CD8-positive, alpha-beta T cell (primary cell): ENCODE measurements at regions of chrX and their contacts with region 1.

Region 1: GRCh38 chrX:57286507-57287251 is at the start of gene FAAH2:
- DNase-seq: peak; percentile 15 to 85 (median 53)
- ATAC-seq: peak; percentile 89
- H3K4me3 ChIP-seq: peak within 1 kb of the TSS; percentile 45 to 61
- H3K4me3 Mint-ChIP-seq: peak within 1 kb of the TSS; percentile 92
- H3K27ac ChIP-seq: peak within 1 kb of the TSS; percentile 19 to 45
- H3K27ac Mint-ChIP-seq: peak within 1 kb of the TSS; percentile 94
- H3K4me1 ChIP-seq: peaks cover 3% of the 10 kb centered on the region
- H3K4me1 Mint-ChIP-seq: peaks cover 29% of the 10 kb centered on the region
- H3K27me3 ChIP-seq: no peaks in the 10 kb centered on the region
- H3K27me3 Mint-ChIP-seq: no peaks in the 10 kb centered on the region
- CTCF ChIP-seq: no peak
- total RNA-seq, gene FAAH2: 2.9 to 3.5 TPM

Region 2: GRCh38 chrX:56975612-56976011 is 311.1 kb before region 1 on chrX:
- CTCF ChIA-PET with region 1: no interaction called
- POLR2A ChIA-PET with region 1: no interaction called
- intact Hi-C with region 1: no loop called
- DNase-seq: no peak
- ATAC-seq: no peak
- H3K4me3 ChIP-seq: no peak overlapping the region
- H3K4me3 Mint-ChIP-seq: no peak overlapping the region
- H3K27ac ChIP-seq: no peak overlapping the region
- H3K27ac Mint-ChIP-seq: no peak overlapping the region
- H3K4me1 ChIP-seq: no peaks in the 10 kb centered on the region
- H3K4me1 Mint-ChIP-seq: peaks cover 3% of the 10 kb centered on the region
- H3K27me3 ChIP-seq: no peaks in the 10 kb centered on the region
- H3K27me3 Mint-ChIP-seq: no peaks in the 10 kb centered on the region
- CTCF ChIP-seq: no peak

Region 3: DNA sequence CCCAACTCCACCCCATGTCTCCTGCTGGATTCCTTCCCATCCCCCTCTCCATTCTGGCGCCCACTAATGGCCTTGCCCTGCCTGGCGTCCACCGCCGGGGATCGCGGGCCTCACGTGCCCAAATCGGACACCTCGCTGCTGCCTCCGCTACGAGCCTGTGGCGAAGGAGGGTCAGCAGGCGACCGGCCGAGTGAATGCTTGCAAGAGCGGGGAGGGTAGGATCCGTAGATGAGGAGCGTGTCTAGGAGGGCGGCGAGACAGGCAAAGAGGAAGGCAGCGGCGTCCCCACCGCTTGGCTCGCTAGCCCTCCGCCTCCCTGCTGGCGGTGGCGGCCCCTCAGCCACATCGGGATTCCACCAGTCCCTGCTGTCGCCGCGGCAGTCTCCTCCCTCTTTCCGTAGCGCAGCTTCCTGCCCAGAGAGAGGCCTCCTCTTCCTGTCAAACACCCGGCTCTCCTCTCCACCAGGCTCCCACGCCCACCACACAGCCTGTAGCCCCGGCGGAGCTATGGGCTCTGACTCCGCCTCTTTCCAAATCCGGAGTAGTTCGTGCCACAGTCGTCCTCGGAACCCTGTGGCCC is 165.4 kb before region 1 on chrX and contains the start of gene SPIN2B:
- CTCF ChIA-PET with region 1: no interaction called
- POLR2A ChIA-PET with region 1: no interaction called
- intact Hi-C with region 1: loop called in 1 of 2 experiments (anchors 10 kb)
- DNase-seq: peak; percentile 43 to 89 (median 75)
- ATAC-seq: peak; percentile 99
- H3K4me3 ChIP-seq: peak within 1 kb of the TSS; percentile 60 to 77
- H3K4me3 Mint-ChIP-seq: peak within 1 kb of the TSS; percentile 94
- H3K27ac ChIP-seq: peak within 1 kb of the TSS; percentile 40 to 53
- H3K27ac Mint-ChIP-seq: peak within 1 kb of the TSS; percentile 89
- H3K4me1 ChIP-seq: peaks cover 4% of the 10 kb centered on the region
- H3K4me1 Mint-ChIP-seq: peaks cover 13% of the 10 kb centered on the region
- H3K27me3 ChIP-seq: no peaks in the 10 kb centered on the region
- H3K27me3 Mint-ChIP-seq: no peaks in the 10 kb centered on the region
- CTCF ChIP-seq: no peak
- total RNA-seq, gene SPIN2B: 8.1 to 8.6 TPM

Region 4: DNA sequence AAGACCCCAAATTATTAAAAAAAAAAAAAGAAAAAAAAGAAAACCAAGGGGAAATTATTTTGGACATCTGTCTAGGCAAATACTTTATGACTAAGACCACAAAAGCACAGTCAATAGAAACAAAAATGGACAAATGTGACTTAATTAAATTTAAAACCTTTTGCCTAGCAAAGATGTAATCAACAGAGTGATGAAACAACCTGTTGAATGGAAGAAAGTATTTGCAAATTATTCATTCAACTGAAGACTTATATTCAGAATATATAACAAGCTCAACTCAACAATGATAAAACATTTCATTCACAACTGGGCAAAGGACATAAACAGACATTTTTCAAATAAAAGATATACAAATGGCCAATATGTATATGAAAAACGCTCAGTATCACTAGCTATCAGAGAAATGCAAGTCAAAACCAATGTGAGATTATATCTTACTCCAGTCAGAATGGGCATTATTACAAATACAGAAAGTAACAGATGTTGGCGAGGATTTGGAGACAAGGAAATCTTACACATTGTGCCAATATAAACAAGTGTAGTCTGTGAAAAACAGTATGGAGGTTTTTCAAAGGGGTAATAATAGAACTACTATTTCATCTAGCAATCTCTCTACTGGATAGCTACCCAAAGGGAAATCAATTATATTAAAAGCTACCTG is 66.9 kb after region 1 on chrX:
- CTCF ChIA-PET with region 1: no interaction called
- POLR2A ChIA-PET with region 1: no interaction called
- intact Hi-C with region 1: no loop called
- DNase-seq: no peak
- ATAC-seq: no peak
- H3K4me3 ChIP-seq: no peak overlapping the region
- H3K4me3 Mint-ChIP-seq: no peak overlapping the region
- H3K27ac ChIP-seq: no peak overlapping the region
- H3K27ac Mint-ChIP-seq: no peak overlapping the region
- H3K4me1 ChIP-seq: no peaks in the 10 kb centered on the region
- H3K4me1 Mint-ChIP-seq: no peaks in the 10 kb centered on the region
- H3K27me3 ChIP-seq: no peaks in the 10 kb centered on the region
- H3K27me3 Mint-ChIP-seq: no peaks in the 10 kb centered on the region
- CTCF ChIP-seq: no peak

Region 5: GRCh38 chrX:57453901-57454300 is 167.2 kb after region 1 on chrX:
- CTCF ChIA-PET with region 1: interaction called, 3 read pairs
- POLR2A ChIA-PET with region 1: no interaction called
- intact Hi-C with region 1: loop called (anchors 5 to 10 kb)
- DNase-seq: peak in 3 of 9 experiments; percentile 0 to 41 (median 29)
- ATAC-seq: no peak
- H3K4me3 ChIP-seq: no peak overlapping the region
- H3K4me3 Mint-ChIP-seq: no peak overlapping the region
- H3K27ac ChIP-seq: no peak overlapping the region
- H3K27ac Mint-ChIP-seq: no peak overlapping the region
- H3K4me1 ChIP-seq: no peaks in the 10 kb centered on the region
- H3K4me1 Mint-ChIP-seq: no peaks in the 10 kb centered on the region
- H3K27me3 ChIP-seq: no peaks in the 10 kb centered on the region
- H3K27me3 Mint-ChIP-seq: no peaks in the 10 kb centered on the region
- CTCF ChIP-seq: no peak

Region 6: GRCh38 chrX:57595381-57595811 is 308.7 kb after region 1 on chrX:
- CTCF ChIA-PET with region 1: no interaction called
- POLR2A ChIA-PET with region 1: no interaction called
- intact Hi-C with region 1: loop called in 1 of 2 experiments (anchors 10 kb)
- DNase-seq: peak in 2 of 9 experiments; percentile 27 to 47
- ATAC-seq: no peak
- H3K4me3 ChIP-seq: no peak overlapping the region
- H3K4me3 Mint-ChIP-seq: peak overlapping the region; percentile 73
- H3K27ac ChIP-seq: no peak overlapping the region
- H3K27ac Mint-ChIP-seq: peak overlapping the region; percentile 49
- H3K4me1 ChIP-seq: peaks cover 20% of the 10 kb centered on the region
- H3K4me1 Mint-ChIP-seq: peaks cover 42% of the 10 kb centered on the region
- H3K27me3 ChIP-seq: no peaks in the 10 kb centered on the region
- H3K27me3 Mint-ChIP-seq: no peaks in the 10 kb centered on the region
- CTCF ChIP-seq: no peak

Region 7: GRCh38 chrX:57643698-57644097 is 357.0 kb after region 1 on chrX:
- CTCF ChIA-PET with region 1: no interaction called
- POLR2A ChIA-PET with region 1: no interaction called
- intact Hi-C with region 1: no loop called
- DNase-seq: no peak
- ATAC-seq: no peak
- H3K4me3 ChIP-seq: no peak overlapping the region
- H3K4me3 Mint-ChIP-seq: no peak overlapping the region
- H3K27ac ChIP-seq: no peak overlapping the region
- H3K27ac Mint-ChIP-seq: no peak overlapping the region
- H3K4me1 ChIP-seq: no peaks in the 10 kb centered on the region
- H3K4me1 Mint-ChIP-seq: no peaks in the 10 kb centered on the region
- H3K27me3 ChIP-seq: no peaks in the 10 kb centered on the region
- H3K27me3 Mint-ChIP-seq: no peaks in the 10 kb centered on the region
- CTCF ChIP-seq: no peak